Activated CD4-positive, alpha-beta memory T cell treated with anti-CD3 and anti-CD28 coated beads for 36 hours (primary cell): ENCODE measurements at regions of chr6 and their contacts with region 1.

Region 1: GRCh38 chr6:44172731-44173500 is 14.3 kb downstream of the CAPN11 start:
- DNase-seq: peak; percentile 87
- H3K4me3 Mint-ChIP-seq: no peak overlapping the region
- H3K27ac Mint-ChIP-seq: peak overlapping the region; percentile 9
- H3K4me1 Mint-ChIP-seq: peaks cover 18% of the 10 kb centered on the region
- H3K27me3 Mint-ChIP-seq: peaks cover 21% of the 10 kb centered on the region

Region 2: GRCh38 chr6:44002593-44003344 is 170.1 kb before region 1 on chr6:
- CTCF ChIA-PET with region 1: no interaction called
- POLR2A ChIA-PET with region 1: no interaction called
- intact Hi-C with region 1: no loop called
- DNase-seq: peak; percentile 80
- H3K4me3 Mint-ChIP-seq: peak overlapping the region; percentile 64
- H3K27ac Mint-ChIP-seq: no peak overlapping the region
- H3K4me1 Mint-ChIP-seq: peaks cover 12% of the 10 kb centered on the region
- H3K27me3 Mint-ChIP-seq: peaks cover 38% of the 10 kb centered on the region

Region 3: GRCh38 chr6:44096612-44097011 is 76.3 kb before region 1 on chr6:
- CTCF ChIA-PET with region 1: interaction called, 11 read pairs
- POLR2A ChIA-PET with region 1: no interaction called
- intact Hi-C with region 1: no loop called
- DNase-seq: peak; percentile 85
- H3K4me3 Mint-ChIP-seq: no peak overlapping the region
- H3K27ac Mint-ChIP-seq: peak overlapping the region; percentile 18
- H3K4me1 Mint-ChIP-seq: no peaks in the 10 kb centered on the region
- H3K27me3 Mint-ChIP-seq: no peaks in the 10 kb centered on the region

Region 4: DNA sequence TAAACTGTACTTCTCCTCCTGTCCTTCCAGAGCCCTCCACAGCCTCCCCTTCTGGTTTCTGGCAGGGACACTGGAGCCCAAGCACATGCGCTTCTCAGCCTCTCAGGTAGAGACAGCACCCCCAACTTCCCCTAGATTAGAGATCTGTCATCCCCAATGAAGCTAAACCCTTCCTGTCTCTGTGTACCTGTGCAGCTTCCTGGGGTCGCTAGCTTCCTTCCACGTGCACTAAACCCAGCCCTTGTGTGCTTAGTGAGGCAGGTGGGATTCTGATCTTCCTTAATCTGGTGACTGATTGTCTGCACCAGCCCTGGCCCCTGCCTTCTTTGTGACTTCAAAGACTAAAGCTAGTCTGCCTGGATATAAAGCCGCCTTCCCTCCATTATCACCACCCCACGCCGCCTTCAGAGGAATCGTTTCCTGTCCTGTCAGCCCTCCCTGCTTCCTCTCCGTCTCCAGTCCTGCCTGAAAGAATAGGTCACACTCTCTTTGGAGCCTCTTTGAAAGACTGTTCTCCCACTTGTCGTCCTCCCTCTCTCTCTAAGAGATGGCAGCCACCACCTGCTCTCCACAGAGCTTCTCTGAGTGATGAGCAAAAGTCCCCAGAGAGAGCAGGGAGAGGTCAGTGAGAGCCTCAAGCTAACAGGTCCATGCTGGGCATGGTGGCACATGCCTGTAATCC is 13.2 kb after region 1 on chr6:
- CTCF ChIA-PET with region 1: interaction called, 13 read pairs
- POLR2A ChIA-PET with region 1: no interaction called
- intact Hi-C with region 1: no loop called
- DNase-seq: no peak
- H3K4me3 Mint-ChIP-seq: no peak overlapping the region
- H3K27ac Mint-ChIP-seq: no peak overlapping the region
- H3K4me1 Mint-ChIP-seq: peaks cover 12% of the 10 kb centered on the region
- H3K27me3 Mint-ChIP-seq: peaks cover 4% of the 10 kb centered on the region

Region 5: DNA sequence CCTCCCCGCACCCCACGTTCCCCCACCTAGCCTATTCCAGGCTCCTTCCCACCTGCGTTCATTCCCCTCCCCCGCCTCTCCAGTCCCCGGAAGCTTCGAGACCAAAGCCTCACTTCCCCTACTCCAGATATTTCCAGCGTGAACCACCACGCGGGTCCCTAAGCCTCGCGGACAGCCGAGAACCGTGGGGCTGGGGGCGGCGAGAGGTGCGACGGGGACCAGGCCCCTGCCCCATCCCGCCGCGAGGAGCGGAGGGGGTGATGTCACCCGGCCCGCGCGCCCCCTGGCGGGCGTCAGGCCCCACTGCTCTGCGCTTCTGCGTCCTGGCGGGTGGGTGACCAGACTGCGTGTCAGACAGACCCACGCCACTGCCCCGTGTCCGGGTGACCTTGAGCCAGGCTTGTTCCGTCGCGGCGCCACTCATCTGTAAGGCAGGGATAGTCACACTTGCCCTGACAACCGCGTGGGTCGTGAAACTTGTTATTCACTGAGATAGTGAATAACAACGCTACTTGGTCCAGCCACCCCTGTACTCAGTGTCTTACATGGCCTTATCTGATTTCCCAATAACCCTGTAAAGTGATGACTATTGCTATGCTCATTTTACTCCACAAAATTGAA is 65.0 kb after region 1 on chr6:
- CTCF ChIA-PET with region 1: interaction called, 13 read pairs
- POLR2A ChIA-PET with region 1: no interaction called
- intact Hi-C with region 1: loop called (anchors 1 kb)
- DNase-seq: peak; percentile 87
- H3K4me3 Mint-ChIP-seq: peak overlapping the region; percentile 83
- H3K27ac Mint-ChIP-seq: peak overlapping the region; percentile 95
- H3K4me1 Mint-ChIP-seq: peaks cover 29% of the 10 kb centered on the region
- H3K27me3 Mint-ChIP-seq: no peaks in the 10 kb centered on the region

Region 6: GRCh38 chr6:44257025-44257752 is 84.3 kb after region 1 on chr6 and contains the start of gene SLC35B2:
- CTCF ChIA-PET with region 1: interaction called, 26 read pairs
- POLR2A ChIA-PET with region 1: interaction called, 4 read pairs
- intact Hi-C with region 1: loop called (anchors 1 kb)
- DNase-seq: peak; percentile 76
- H3K4me3 Mint-ChIP-seq: peak within 1 kb of the TSS; percentile 77
- H3K27ac Mint-ChIP-seq: peak within 1 kb of the TSS; percentile 83
- H3K4me1 Mint-ChIP-seq: peaks cover 56% of the 10 kb centered on the region
- H3K27me3 Mint-ChIP-seq: no peaks in the 10 kb centered on the region
- total RNA-seq, gene SLC35B2: 16.5 to 16.8 TPM

Region 7: DNA sequence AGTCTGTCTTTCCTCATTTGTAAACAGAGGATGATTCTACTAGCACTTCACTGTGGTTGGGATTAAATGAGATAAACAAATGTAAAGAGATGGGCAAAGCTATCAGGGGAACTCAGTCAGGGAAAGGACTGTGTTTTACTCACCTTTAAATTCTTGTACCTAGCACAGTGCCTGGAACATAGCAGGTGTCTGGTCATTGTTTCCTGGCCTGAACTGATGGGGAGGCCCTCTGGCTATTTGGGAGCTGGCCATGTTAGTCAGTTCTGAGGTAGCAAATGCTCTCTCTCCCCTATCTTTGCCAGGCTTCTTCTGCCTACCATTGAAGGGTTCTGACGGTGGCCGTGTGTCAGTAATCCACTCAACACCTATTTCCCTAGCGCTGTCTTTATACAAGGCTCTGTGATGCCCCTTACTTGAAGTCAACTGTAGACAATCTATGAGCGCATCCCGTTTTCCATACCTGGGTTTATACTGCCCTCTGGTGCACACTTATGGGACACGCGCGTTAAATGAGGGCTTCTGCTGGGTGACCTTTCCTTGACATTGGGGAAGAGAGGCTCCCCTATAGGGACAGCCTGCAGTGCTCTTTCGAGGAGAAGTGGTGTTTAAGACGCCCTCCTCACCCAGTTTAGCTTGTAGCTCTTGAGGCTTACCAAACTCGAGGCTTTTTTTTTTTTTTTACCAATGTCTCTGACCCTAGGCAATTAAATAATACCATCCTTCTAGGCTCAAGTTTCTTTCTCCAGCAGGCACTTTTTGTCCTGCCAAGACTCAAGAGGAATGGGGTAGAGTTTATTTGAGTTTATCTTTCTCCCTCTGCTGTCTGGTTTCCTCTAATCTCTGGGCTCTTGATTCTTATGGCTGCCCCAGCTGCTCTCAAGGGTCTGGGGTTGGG is 165.6 kb after region 1 on chr6:
- CTCF ChIA-PET with region 1: interaction called, 11 read pairs
- POLR2A ChIA-PET with region 1: no interaction called
- intact Hi-C with region 1: loop called (anchors 1 kb)
- DNase-seq: peak; percentile 79
- H3K4me3 Mint-ChIP-seq: no peak overlapping the region
- H3K27ac Mint-ChIP-seq: peak overlapping the region; percentile 8
- H3K4me1 Mint-ChIP-seq: peaks cover 3% of the 10 kb centered on the region
- H3K27me3 Mint-ChIP-seq: peaks cover 19% of the 10 kb centered on the region